Testis (tissue), 5 donors: ENCODE measurements at regions of chr6 and their contacts with region 1.

Region 1: GRCh38 chr6:127539272-127539671 is 20.1 kb upstream of the MTCL3 start:
- DNase-seq: no peak
- H3K4me3 ChIP-seq: no peak overlapping the region
- H3K27ac ChIP-seq: no peak overlapping the region
- H3K4me1 ChIP-seq: no peaks in the 10 kb centered on the region
- H3K27me3 ChIP-seq: no peaks in the 10 kb centered on the region
- CTCF ChIP-seq: peak in 1 of 3 experiments; percentile 34
- POLR2A ChIP-seq: no peak

Region 2: GRCh38 chr6:127464881-127465459 is 74.3 kb before region 1 on chr6:
- intact Hi-C with region 1: loop called (anchors 10 kb)
- DNase-seq: peak; percentile 76
- H3K4me3 ChIP-seq: no peak overlapping the region
- H3K27ac ChIP-seq: peak overlapping the region in 1 of 2 donors; percentile 48
- H3K4me1 ChIP-seq: no peaks in the 10 kb centered on the region
- H3K27me3 ChIP-seq: no peaks in the 10 kb centered on the region
- CTCF ChIP-seq: peak; percentile 57 to 66 (median 61)
- POLR2A ChIP-seq: no peak

Region 3: GRCh38 chr6:128095362-128095761 is 556.1 kb after region 1 on chr6:
- intact Hi-C with region 1: no loop called
- DNase-seq: no peak
- H3K4me3 ChIP-seq: no peak overlapping the region
- H3K27ac ChIP-seq: no peak overlapping the region
- H3K4me1 ChIP-seq: no peaks in the 10 kb centered on the region
- H3K27me3 ChIP-seq: no peaks in the 10 kb centered on the region
- CTCF ChIP-seq: no peak
- POLR2A ChIP-seq: no peak